Activated B cell treated with CpG ODN at 0.5 μM for 24 hours (primary cell): ENCODE measurements at regions of chr19 and their contacts with region 1.

Region 1: DNA sequence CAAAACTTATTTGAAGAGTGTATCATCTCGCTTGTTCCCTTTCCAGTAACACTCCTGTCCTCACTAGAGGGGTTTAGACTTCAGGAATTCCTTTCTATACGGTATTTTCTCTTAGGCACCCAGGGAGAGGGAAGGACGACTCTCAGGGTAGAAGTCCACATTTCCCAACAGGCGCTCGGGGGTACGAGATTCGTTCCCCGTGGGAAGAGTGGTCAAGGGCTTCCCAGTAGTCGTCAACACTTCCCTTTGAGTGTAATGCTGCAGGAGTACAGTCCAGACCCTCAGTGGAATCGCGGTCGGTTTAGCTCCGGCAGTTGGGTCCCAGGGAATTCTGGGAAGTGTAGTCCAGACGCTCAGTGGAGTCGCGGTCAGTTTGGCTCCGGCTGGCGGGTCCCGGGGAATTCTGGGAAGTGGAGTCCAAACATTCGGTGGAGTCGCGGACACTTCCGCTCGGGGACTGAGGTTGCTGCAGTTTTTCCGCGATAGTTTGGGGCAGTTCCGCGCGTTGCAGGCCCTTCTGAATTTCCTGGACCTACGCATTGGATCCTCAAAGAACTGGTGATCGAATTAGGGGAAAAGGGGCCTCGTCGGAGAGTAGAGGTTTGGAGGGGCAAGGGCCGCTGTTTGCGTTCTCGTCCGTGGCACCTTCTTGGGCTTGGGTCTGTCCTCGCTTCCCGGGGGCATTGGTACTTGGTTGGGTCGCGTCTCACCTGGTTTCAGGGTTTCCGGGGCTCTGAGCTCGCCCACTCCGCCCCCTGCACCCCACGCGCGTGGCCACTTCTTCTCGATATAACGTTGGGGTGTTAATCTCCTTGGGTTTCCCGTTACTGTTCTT is at the start of gene ZNF224:
- DNase-seq: peak; percentile 66
- ATAC-seq: peak; percentile 93
- H3K4me3 Mint-ChIP-seq: peak within 1 kb of the TSS; percentile 99
- H3K27ac Mint-ChIP-seq: peak within 1 kb of the TSS; percentile 89
- H3K4me1 Mint-ChIP-seq: peaks cover 14% of the 10 kb centered on the region
- H3K27me3 Mint-ChIP-seq: no peaks in the 10 kb centered on the region
- CTCF ChIP-seq: no peak
- total RNA-seq, gene ZNF224: 49.2 and 53.3 TPM in 2 replicates

Region 2: GRCh38 chr19:43847884-43848283 is 246.3 kb before region 1 on chr19:
- CTCF ChIA-PET with region 1: no interaction called
- POLR2A ChIA-PET with region 1: no interaction called
- intact Hi-C with region 1: no loop called
- DNase-seq: no peak
- ATAC-seq: no peak
- H3K4me3 Mint-ChIP-seq: no peak overlapping the region
- H3K27ac Mint-ChIP-seq: no peak overlapping the region
- H3K4me1 Mint-ChIP-seq: no peaks in the 10 kb centered on the region
- H3K27me3 Mint-ChIP-seq: no peaks in the 10 kb centered on the region
- CTCF ChIP-seq: no peak

Region 3: DNA sequence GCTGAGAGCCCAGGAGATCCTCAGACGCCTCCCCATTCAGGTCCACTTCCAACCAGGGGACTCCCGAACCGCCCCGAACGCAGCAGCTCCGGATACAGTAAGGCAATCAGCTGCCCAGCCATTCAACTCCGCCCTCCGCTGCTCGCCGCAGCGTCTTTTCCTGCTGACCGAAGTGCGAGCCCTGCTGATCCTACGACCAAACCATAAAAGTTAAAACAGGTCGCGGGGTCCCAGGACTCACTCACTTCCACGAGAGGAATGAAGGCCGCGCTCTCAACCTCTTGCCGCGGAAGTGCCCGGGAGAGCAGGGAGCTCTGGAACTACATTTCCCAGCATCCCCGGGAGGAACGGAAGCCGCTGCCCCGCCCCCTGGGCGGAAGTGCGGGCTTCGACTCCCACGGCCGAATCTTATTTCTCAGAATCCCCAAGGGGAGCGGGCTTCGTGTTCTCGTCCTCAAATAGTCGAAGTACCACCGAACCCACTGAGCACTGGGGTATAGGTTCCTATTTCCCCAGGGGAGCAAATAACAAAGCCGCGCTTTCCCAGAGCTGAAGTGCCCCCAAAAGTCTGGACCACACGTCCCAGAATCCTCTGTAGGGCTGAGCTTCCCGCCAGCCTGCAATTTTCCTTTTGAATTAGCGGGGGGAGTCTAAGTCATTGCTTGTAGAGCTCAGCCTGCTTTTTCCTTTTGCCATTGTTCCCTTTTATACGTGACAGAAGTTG is 159.0 kb before region 1 on chr19 and contains the start of gene ZNF45:
- CTCF ChIA-PET with region 1: interaction called, 6 read pairs
- POLR2A ChIA-PET with region 1: interaction called, 9 read pairs
- intact Hi-C with region 1: loop called (anchors 2 kb)
- DNase-seq: peak; percentile 81
- ATAC-seq: peak; percentile 96
- H3K4me3 Mint-ChIP-seq: peak within 1 kb of the TSS; percentile 93
- H3K27ac Mint-ChIP-seq: peak within 1 kb of the TSS; percentile 89
- H3K4me1 Mint-ChIP-seq: peaks cover 22% of the 10 kb centered on the region
- H3K27me3 Mint-ChIP-seq: peaks cover 4% of the 10 kb centered on the region
- CTCF ChIP-seq: no peak
- total RNA-seq, gene ZNF45: 17.2 and 19.1 TPM in 2 replicates

Region 4: DNA sequence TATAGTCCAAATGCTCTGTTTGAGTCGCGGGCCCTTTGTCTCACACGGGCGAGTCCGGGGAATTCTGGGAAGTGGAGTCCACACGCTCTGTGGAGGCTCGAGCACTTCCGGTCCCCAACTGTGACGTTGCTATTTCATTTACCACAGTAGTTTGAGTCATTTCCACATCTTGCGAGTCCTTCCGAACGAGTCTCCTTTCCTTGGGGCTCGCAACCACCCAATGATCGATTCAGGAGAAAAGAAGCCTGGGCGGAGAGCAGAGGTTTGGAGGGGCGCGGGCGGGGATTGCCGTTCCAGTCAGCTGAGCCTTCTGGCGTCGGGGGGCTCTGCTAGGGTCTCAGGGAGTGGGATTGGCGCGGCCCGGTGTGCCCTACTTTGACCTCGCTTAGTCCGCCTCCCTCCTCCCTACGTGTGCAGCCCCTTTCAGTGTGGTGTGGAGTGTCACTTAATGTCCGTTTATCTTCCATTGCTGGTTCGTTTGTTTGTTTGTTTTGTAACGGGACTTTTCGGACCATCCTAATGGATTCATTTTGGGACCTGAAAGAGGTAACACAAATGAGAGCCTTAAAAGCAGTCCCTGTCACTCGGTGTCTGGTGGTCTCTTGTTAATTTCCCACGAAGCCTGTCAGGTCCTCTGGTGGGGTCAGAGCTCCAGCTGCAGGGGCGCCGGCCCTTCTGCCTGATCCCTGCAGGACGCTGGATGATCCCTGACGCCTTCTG is 68.8 kb before region 1 on chr19 and contains the start of gene ZNF222:
- CTCF ChIA-PET with region 1: no interaction called
- POLR2A ChIA-PET with region 1: no interaction called
- intact Hi-C with region 1: loop called (anchors 2 kb)
- DNase-seq: peak; percentile 57
- ATAC-seq: peak; percentile 99
- H3K4me3 Mint-ChIP-seq: peak within 1 kb of the TSS; percentile 98
- H3K27ac Mint-ChIP-seq: peak within 1 kb of the TSS; percentile 85
- H3K4me1 Mint-ChIP-seq: peaks cover 18% of the 10 kb centered on the region
- H3K27me3 Mint-ChIP-seq: peaks cover 6% of the 10 kb centered on the region
- CTCF ChIP-seq: no peak
- total RNA-seq, gene ZNF222: 6.0 and 6.7 TPM in 2 replicates

Region 5: GRCh38 chr19:44113138-44113783 is 19.1 kb after region 1 on chr19 and contains the start of gene ZNF225:
- CTCF ChIA-PET with region 1: interaction called, 3 read pairs
- POLR2A ChIA-PET with region 1: interaction called, 19 read pairs
- intact Hi-C with region 1: loop called (anchors 1 kb)
- DNase-seq: peak; percentile 65
- ATAC-seq: peak; percentile 95
- H3K4me3 Mint-ChIP-seq: peak within 1 kb of the TSS; percentile 97
- H3K27ac Mint-ChIP-seq: peak within 1 kb of the TSS; percentile 83
- H3K4me1 Mint-ChIP-seq: peaks cover 31% of the 10 kb centered on the region
- H3K27me3 Mint-ChIP-seq: no peaks in the 10 kb centered on the region
- CTCF ChIP-seq: no peak
- total RNA-seq, gene ZNF225: 7.9 and 9.2 TPM in 2 replicates

Region 6: GRCh38 chr19:44212250-44212865 is 118.2 kb after region 1 on chr19 and contains the start of gene ZNF227:
- CTCF ChIA-PET with region 1: no interaction called
- POLR2A ChIA-PET with region 1: interaction called, 20 read pairs
- intact Hi-C with region 1: no loop called
- DNase-seq: peak; percentile 69
- ATAC-seq: peak; percentile 93
- H3K4me3 Mint-ChIP-seq: peak within 1 kb of the TSS; percentile 95
- H3K27ac Mint-ChIP-seq: peak within 1 kb of the TSS; percentile 89
- H3K4me1 Mint-ChIP-seq: peaks cover 20% of the 10 kb centered on the region
- H3K27me3 Mint-ChIP-seq: no peaks in the 10 kb centered on the region
- CTCF ChIP-seq: no peak
- total RNA-seq, gene ZNF227: 33.1 and 36.9 TPM in 2 replicates

Region 7: GRCh38 chr19:44236384-44236783 is 142.2 kb after region 1 on chr19:
- CTCF ChIA-PET with region 1: no interaction called
- POLR2A ChIA-PET with region 1: no interaction called
- intact Hi-C with region 1: no loop called
- DNase-seq: no peak
- ATAC-seq: no peak
- H3K4me3 Mint-ChIP-seq: no peak overlapping the region
- H3K27ac Mint-ChIP-seq: no peak overlapping the region
- H3K4me1 Mint-ChIP-seq: no peaks in the 10 kb centered on the region
- H3K27me3 Mint-ChIP-seq: no peaks in the 10 kb centered on the region
- CTCF ChIP-seq: no peak

Region 8: DNA sequence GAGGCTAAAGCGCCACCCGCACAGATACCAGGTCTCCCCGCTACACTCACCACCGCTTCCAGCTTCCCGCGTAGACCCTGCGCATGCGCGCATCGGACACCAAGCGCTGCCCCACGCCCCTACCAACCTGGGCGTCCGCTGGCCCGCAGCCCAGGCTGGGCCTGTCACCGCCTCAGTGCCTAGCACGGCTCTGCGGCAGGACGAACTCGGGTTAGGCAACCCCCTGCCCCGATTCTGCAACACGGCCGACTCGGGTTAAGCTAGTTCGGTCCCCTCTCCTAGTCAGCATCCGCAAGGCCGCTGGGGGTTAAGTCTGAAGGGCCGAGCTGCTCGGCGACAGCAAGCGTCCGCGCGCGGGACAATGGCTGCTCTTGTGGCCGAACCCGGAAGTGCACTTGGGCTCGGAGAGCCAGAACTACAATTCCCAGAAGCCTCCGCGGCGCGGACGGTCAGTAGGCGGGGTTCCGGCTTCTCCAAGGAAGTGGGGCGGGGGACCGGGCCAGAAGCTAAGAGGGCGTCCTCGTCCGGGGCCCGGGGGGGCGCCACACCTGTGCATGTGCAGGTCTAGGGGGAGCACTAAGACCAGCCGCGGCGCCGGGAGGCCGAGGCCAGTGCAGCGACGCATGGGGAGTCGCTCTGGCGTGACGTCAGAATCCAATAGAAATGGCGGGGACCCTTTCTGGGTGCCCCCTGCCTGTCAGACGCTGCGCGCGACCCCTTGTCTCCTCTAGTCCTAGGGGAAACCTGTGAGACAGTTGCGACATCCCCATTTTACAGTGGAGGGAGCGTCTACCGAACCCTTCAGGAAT is 406.2 kb after region 1 on chr19 and contains the start of gene ZNF180:
- CTCF ChIA-PET with region 1: no interaction called
- POLR2A ChIA-PET with region 1: interaction called, 9 read pairs
- intact Hi-C with region 1: loop called (anchors 1 kb)
- DNase-seq: peak; percentile 95
- ATAC-seq: peak; percentile 91
- H3K4me3 Mint-ChIP-seq: peak within 1 kb of the TSS; percentile 96
- H3K27ac Mint-ChIP-seq: peak within 1 kb of the TSS; percentile 86
- H3K4me1 Mint-ChIP-seq: peaks cover 36% of the 10 kb centered on the region
- H3K27me3 Mint-ChIP-seq: peaks cover 10% of the 10 kb centered on the region
- CTCF ChIP-seq: no peak
- total RNA-seq, gene ZNF180: 11.6 and 14.4 TPM in 2 replicates